H1 (cell line): ENCODE measurements at regions of chr7 and their contacts with region 1.

Region 1: DNA sequence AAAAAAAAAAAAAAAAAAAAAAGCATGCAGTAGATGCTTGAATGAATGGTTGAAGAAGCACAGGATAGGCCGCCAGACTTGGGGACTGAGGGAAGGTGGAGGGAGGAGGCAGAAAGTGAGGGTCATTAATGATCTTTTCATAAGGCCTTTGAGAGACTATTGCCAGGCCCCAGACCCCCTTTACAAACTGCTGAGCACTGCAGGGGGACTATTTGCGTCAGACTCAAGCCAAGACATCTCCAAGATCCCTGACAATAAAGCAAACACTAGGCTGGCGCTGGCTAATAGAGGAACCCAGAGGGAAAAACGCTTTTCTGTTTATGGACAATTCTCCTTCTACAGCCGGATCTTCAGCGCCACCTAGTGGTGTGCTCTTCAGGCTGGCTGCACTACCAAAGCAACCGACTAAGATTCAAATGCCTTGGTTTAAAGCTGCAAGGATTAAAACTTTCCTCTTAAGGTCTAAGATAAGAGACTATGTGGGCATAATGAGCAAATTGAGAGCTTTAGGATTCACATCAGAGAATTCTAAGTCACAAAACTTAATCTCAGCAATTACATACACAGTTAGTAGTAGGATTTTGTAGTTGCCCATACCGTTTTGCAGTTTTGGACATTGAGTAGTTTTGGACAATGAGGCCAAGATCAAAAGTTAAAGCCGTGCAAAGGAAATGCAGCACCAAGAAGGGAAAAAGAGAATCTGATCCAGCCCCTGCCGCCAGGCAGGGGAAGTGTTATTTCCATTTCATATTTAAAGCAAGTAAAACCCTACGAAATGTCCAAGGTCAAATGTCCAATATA is 17.9 kb upstream of the AGK start:
- DNase-seq: peak in 1 of 2 experiments; percentile 79
- H3K4me3 ChIP-seq: no peak overlapping the region
- H3K27ac ChIP-seq: no peak overlapping the region; the same call in 1 of the 2 replicates
- H3K4me1 ChIP-seq: no peaks in the 10 kb centered on the region
- H3K27me3 ChIP-seq: no peaks in the 10 kb centered on the region
- CTCF ChIP-seq: peak; percentile 76 to 93 (median 88)
- EP300 ChIP-seq: no peak
- POLR2A ChIP-seq: no peak
- RAD21 ChIP-seq: peak; percentile 97 to 98

Region 2: DNA sequence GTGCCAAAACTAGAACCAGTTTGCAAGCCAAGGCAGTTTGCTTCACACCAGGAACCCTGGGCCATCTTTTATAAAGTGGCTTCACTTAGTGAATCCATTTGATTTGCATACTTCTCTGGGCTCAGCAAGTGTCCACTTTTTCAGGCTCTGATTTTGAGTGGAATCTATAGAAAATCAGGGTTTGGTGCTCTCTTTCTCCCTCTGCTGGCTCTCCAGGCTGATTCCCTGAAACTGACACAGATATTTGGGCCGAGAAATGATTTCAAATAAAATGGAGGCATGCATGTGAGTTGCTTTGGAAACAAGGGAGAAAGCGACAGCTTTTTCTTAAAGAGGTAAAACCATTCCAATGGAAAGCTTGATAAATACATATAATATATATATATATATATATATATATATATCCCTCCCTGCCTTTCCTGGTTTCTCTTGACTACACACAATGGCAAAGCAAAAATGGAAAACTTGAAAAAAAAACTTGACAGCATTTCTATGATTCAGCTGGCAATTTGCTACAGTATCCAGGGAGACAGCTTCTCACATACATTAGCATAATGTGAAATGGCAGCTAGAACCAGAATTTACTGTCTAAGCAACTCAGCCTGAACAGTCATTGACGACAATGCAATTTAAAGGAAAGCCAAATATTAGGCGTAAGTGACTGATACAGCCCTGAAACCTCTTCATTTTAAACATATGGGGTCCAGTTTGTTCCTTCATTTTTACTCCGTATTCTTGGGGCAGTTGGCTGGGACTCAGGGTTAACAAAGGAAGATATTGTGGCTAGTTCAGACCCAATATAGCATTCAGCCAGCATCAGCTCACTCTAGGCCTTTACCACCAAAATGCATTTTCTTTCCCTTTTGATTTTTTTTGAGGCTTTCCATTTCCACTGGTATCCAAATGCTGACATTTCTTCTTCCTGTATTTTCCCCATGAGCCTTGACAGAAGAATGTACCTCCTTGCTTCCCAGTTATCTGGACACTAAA is 271.0 kb before region 1 on chr7:
- CTCF ChIA-PET with region 1: interaction called, 14 read pairs
- POLR2A ChIA-PET with region 1: no interaction called
- DNase-seq: no peak
- H3K4me3 ChIP-seq: no peak overlapping the region
- H3K27ac ChIP-seq: no peak overlapping the region
- H3K4me1 ChIP-seq: no peaks in the 10 kb centered on the region; a peak in 2 of 7 replicates
- H3K27me3 ChIP-seq: no peaks in the 10 kb centered on the region
- CTCF ChIP-seq: peak in 2 of 3 experiments; percentile 57 to 65; a peak in 3 of 4 replicates
- EP300 ChIP-seq: no peak
- POLR2A ChIP-seq: no peak
- RAD21 ChIP-seq: peak; percentile 55 to 62

Region 3: GRCh38 chr7:141276031-141276430 is 257.3 kb before region 1 on chr7:
- CTCF ChIA-PET with region 1: interaction called, 31 read pairs
- POLR2A ChIA-PET with region 1: no interaction called
- DNase-seq: no peak
- H3K4me3 ChIP-seq: no peak overlapping the region
- H3K27ac ChIP-seq: no peak overlapping the region
- H3K4me1 ChIP-seq: no peaks in the 10 kb centered on the region; a peak in 1 of 7 replicates
- H3K27me3 ChIP-seq: no peaks in the 10 kb centered on the region
- CTCF ChIP-seq: no peak
- EP300 ChIP-seq: no peak
- POLR2A ChIP-seq: no peak
- RAD21 ChIP-seq: no peak

Region 4: GRCh38 chr7:141387521-141388217 is 145.7 kb before region 1 on chr7:
- CTCF ChIA-PET with region 1: no interaction called
- POLR2A ChIA-PET with region 1: no interaction called
- DNase-seq: no peak
- H3K4me3 ChIP-seq: no peak overlapping the region
- H3K27ac ChIP-seq: no peak overlapping the region
- H3K4me1 ChIP-seq: no peaks in the 10 kb centered on the region
- H3K27me3 ChIP-seq: no peaks in the 10 kb centered on the region
- CTCF ChIP-seq: no peak
- EP300 ChIP-seq: no peak
- POLR2A ChIP-seq: no peak
- RAD21 ChIP-seq: no peak

Region 5: GRCh38 chr7:141522657-141523342 is 10.5 kb before region 1 on chr7:
- CTCF ChIA-PET with region 1: interaction called, 12 read pairs
- POLR2A ChIA-PET with region 1: no interaction called
- DNase-seq: no peak
- H3K4me3 ChIP-seq: no peak overlapping the region
- H3K27ac ChIP-seq: no peak overlapping the region
- H3K4me1 ChIP-seq: peaks cover 0 to 3% (median 0%) of the 10 kb centered on the region in 4 experiments; a peak in 2 of 7 replicates
- H3K27me3 ChIP-seq: no peaks in the 10 kb centered on the region
- CTCF ChIP-seq: no peak
- EP300 ChIP-seq: no peak
- POLR2A ChIP-seq: no peak
- RAD21 ChIP-seq: no peak

Region 6: GRCh38 chr7:141551094-141551781 is 17.9 kb after region 1 on chr7 and contains the start of gene AGK:
- CTCF ChIA-PET with region 1: interaction called, 16 read pairs
- POLR2A ChIA-PET with region 1: interaction called, 4 read pairs
- DNase-seq: peak; percentile 43 to 88
- H3K4me3 ChIP-seq: peak within 1 kb of the TSS; percentile 63 to 86 (median 72)
- H3K27ac ChIP-seq: peak within 1 kb of the TSS; percentile 3; the same call in 1 of the 2 replicates
- H3K4me1 ChIP-seq: peaks cover 3 to 5% (median 5%) of the 10 kb centered on the region in 4 experiments; a peak in 6 of 7 replicates
- H3K27me3 ChIP-seq: no peaks in the 10 kb centered on the region
- CTCF ChIP-seq: no peak
- EP300 ChIP-seq: peak in 1 of 2 experiments; percentile 78; a peak in 1 of 3 replicates
- POLR2A ChIP-seq: peak; percentile 53 to 89
- RAD21 ChIP-seq: no peak; a peak in 1 of 4 replicates
- total RNA-seq, gene AGK: 30.0 and 34.0 TPM in 2 replicates

Region 7: GRCh38 chr7:141624763-141625162 is 91.4 kb after region 1 on chr7:
- CTCF ChIA-PET with region 1: no interaction called
- POLR2A ChIA-PET with region 1: no interaction called
- DNase-seq: no peak
- H3K4me3 ChIP-seq: no peak overlapping the region
- H3K27ac ChIP-seq: no peak overlapping the region
- H3K4me1 ChIP-seq: no peaks in the 10 kb centered on the region
- H3K27me3 ChIP-seq: no peaks in the 10 kb centered on the region
- CTCF ChIP-seq: no peak
- EP300 ChIP-seq: no peak
- POLR2A ChIP-seq: no peak
- RAD21 ChIP-seq: no peak

Region 8: GRCh38 chr7:141950806-141951205 is 417.5 kb after region 1 on chr7:
- CTCF ChIA-PET with region 1: no interaction called
- POLR2A ChIA-PET with region 1: no interaction called
- DNase-seq: no peak
- H3K4me3 ChIP-seq: no peak overlapping the region
- H3K27ac ChIP-seq: no peak overlapping the region
- H3K4me1 ChIP-seq: peaks cover 0 to 6% (median 2%) of the 10 kb centered on the region in 4 experiments; a peak in 3 of 7 replicates
- H3K27me3 ChIP-seq: no peaks in the 10 kb centered on the region
- CTCF ChIP-seq: no peak
- EP300 ChIP-seq: no peak
- POLR2A ChIP-seq: no peak
- RAD21 ChIP-seq: no peak